Natural killer cell (primary cell): ENCODE measurements at regions of chr17 and their contacts with region 1.

Region 1: GRCh38 chr17:31216053-31216751 is 80.8 kb downstream of the OMG start:
- DNase-seq: peak in 1 of 2 donors; percentile 65
- ATAC-seq: no peak
- H3K4me3 ChIP-seq: no peak overlapping the region
- H3K4me3 Mint-ChIP-seq: no peak overlapping the region
- H3K27ac ChIP-seq: no peak overlapping the region
- H3K27ac Mint-ChIP-seq: no peak overlapping the region
- H3K4me1 ChIP-seq: no peaks in the 10 kb centered on the region
- H3K4me1 Mint-ChIP-seq: no peaks in the 10 kb centered on the region
- H3K27me3 ChIP-seq: no peaks in the 10 kb centered on the region
- H3K27me3 Mint-ChIP-seq: no peaks in the 10 kb centered on the region
- CTCF ChIP-seq: peak; percentile 76

Region 2: DNA sequence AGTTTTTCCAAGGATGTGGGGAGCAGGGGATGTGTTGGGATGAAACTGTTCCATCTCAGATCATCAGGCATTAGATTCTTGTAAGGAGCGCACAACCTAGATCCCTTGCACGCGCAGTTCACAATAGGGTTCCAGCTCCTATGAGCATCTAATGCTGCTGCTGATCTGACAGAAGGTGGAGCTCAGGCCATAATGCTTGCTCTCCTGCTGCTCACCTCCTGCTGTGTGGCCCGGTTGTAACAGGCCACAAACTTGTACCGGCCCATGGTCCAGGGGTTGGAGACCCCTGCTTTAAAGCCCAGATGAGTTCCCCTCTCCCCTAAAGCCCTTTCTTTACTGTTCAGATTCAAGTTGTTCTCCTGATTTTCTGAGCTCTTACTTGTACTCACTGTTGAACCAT is 200.6 kb before region 1 on chr17:
- intact Hi-C with region 1: loop called (anchors 2 kb)
- DNase-seq: no peak
- ATAC-seq: no peak
- H3K4me3 ChIP-seq: no peak overlapping the region
- H3K4me3 Mint-ChIP-seq: no peak overlapping the region
- H3K27ac ChIP-seq: no peak overlapping the region
- H3K27ac Mint-ChIP-seq: no peak overlapping the region
- H3K4me1 ChIP-seq: no peaks in the 10 kb centered on the region
- H3K4me1 Mint-ChIP-seq: peaks cover 12 to 16% of the 10 kb centered on the region in 2 donors
- H3K27me3 ChIP-seq: no peaks in the 10 kb centered on the region
- H3K27me3 Mint-ChIP-seq: no peaks in the 10 kb centered on the region
- CTCF ChIP-seq: no peak

Region 3: GRCh38 chr17:31269578-31269983 is 53.4 kb after region 1 on chr17:
- intact Hi-C with region 1: no loop called
- DNase-seq: no peak
- ATAC-seq: no peak
- H3K4me3 ChIP-seq: no peak overlapping the region
- H3K4me3 Mint-ChIP-seq: no peak overlapping the region
- H3K27ac ChIP-seq: no peak overlapping the region
- H3K27ac Mint-ChIP-seq: no peak overlapping the region
- H3K4me1 ChIP-seq: no peaks in the 10 kb centered on the region
- H3K4me1 Mint-ChIP-seq: no peaks in the 10 kb centered on the region
- H3K27me3 ChIP-seq: no peaks in the 10 kb centered on the region
- H3K27me3 Mint-ChIP-seq: no peaks in the 10 kb centered on the region
- CTCF ChIP-seq: no peak